ENCODE measurements at regions of chr6 and their contacts with region 1.

Region 1: DNA sequence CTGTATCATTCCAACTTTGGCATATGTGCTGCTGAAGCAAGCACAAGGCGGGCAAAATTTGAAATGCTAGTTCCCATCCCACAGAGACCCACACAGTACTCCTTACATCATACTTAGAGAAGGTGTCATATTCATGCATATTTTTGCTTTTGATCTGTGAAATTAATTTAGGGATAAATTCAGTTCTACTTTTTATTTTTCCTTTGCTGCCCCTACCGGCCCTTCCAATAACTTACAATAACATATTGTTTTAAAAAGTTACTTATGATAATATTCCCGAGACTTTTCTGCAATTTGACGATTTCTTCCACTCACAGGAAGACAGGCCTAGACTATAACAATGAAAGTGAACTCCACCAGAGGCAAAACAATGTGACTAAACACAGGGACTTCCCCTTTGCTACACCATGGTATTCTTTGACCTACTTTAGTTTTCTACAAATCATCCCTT is 35.0 kb downstream of the SESN1 start:
- DNase-seq: peak in 1 of 2 experiments; percentile 49
- H3K4me3 ChIP-seq: no peak overlapping the region
- H3K27ac ChIP-seq: peak overlapping the region; percentile 41
- H3K4me1 ChIP-seq: peaks cover 33% of the 10 kb centered on the region
- H3K27me3 ChIP-seq: no peaks in the 10 kb centered on the region
- CTCF ChIP-seq: peak; percentile 60

Region 2: DNA sequence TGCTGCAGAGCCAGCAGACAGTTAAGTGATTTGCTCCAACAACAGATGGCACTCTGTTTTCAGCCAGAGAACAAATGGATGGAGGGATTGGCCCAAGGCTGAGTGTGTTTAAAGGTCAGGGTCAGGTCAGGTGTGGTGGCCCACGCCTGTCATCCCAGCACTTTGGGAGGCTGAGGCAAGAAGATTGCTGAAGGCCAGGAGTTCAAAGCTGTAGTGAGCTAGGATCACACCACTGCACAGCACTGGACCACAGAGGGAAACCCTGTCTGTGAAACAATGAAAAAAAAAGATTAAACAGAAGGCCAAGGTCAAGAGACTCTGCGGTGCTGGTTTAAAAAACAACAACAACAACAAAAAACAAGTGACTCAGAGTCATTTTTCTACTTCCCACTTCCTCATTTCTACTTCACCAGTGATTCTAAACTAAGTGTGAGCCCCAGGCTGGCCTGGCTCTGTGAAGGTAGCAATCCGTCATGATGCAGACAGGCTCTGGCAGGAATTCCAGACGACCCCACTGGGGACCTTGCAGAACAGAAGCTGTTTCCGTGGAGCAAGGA is 253.9 kb before region 1 on chr6:
- CTCF ChIA-PET with region 1: no interaction called
- POLR2A ChIA-PET with region 1: no interaction called
- intact Hi-C with region 1: no loop called
- DNase-seq: peak in 1 of 2 experiments; percentile 37
- H3K4me3 ChIP-seq: no peak overlapping the region
- H3K27ac ChIP-seq: no peak overlapping the region
- H3K4me1 ChIP-seq: peaks cover 19% of the 10 kb centered on the region
- H3K27me3 ChIP-seq: no peaks in the 10 kb centered on the region
- CTCF ChIP-seq: no peak

Region 3: GRCh38 chr6:108989700-108990099 is 69.9 kb before region 1 on chr6:
- CTCF ChIA-PET with region 1: no interaction called
- POLR2A ChIA-PET with region 1: no interaction called
- intact Hi-C with region 1: loop called (anchors 10 kb)
- DNase-seq: no peak
- H3K4me3 ChIP-seq: peak overlapping the region; percentile 6; the same call in 1 of the 2 replicates
- H3K27ac ChIP-seq: no peak overlapping the region
- H3K4me1 ChIP-seq: peaks cover 27% of the 10 kb centered on the region
- H3K27me3 ChIP-seq: no peaks in the 10 kb centered on the region
- CTCF ChIP-seq: no peak

Measured in PC-9 (cell line).